ENCODE measurements at regions of chr5 and their contacts with region 1.

Region 1: GRCh38 chr5:151051066-151051930 is 29.5 kb downstream of the TNIP1 start:
- DNase-seq: peak; percentile 50 to 84 (median 76)
- ATAC-seq: peak; percentile 75
- H3K4me3 ChIP-seq: no peak overlapping the region
- H3K4me3 Mint-ChIP-seq: no peak overlapping the region
- H3K27ac ChIP-seq: no peak overlapping the region
- H3K27ac Mint-ChIP-seq: peak overlapping the region; percentile 22
- H3K4me1 ChIP-seq: peaks cover 4% of the 10 kb centered on the region
- H3K4me1 Mint-ChIP-seq: peaks cover 11% of the 10 kb centered on the region
- H3K27me3 ChIP-seq: no peaks in the 10 kb centered on the region
- H3K27me3 Mint-ChIP-seq: no peaks in the 10 kb centered on the region
- CTCF ChIP-seq: peak; percentile 72

Region 2: GRCh38 chr5:150129813-150130492 is 921.3 kb before region 1 on chr5:
- CTCF ChIA-PET with region 1: no interaction called
- POLR2A ChIA-PET with region 1: no interaction called
- intact Hi-C with region 1: no loop called
- DNase-seq: peak in 8 of 9 experiments; percentile 13 to 61 (median 46)
- ATAC-seq: peak; percentile 52
- H3K4me3 ChIP-seq: no peak overlapping the region
- H3K4me3 Mint-ChIP-seq: no peak overlapping the region
- H3K27ac ChIP-seq: no peak overlapping the region
- H3K27ac Mint-ChIP-seq: no peak overlapping the region
- H3K4me1 ChIP-seq: no peaks in the 10 kb centered on the region
- H3K4me1 Mint-ChIP-seq: no peaks in the 10 kb centered on the region
- H3K27me3 ChIP-seq: no peaks in the 10 kb centered on the region
- H3K27me3 Mint-ChIP-seq: no peaks in the 10 kb centered on the region
- CTCF ChIP-seq: peak; percentile 67

Region 3: GRCh38 chr5:150560401-150561193 is 490.7 kb before region 1 on chr5:
- CTCF ChIA-PET with region 1: no interaction called
- POLR2A ChIA-PET with region 1: no interaction called
- intact Hi-C with region 1: loop called in 1 of 2 experiments (anchors 5 kb)
- DNase-seq: peak; percentile 68 to 93 (median 84)
- ATAC-seq: peak; percentile 97
- H3K4me3 ChIP-seq: no peak overlapping the region
- H3K4me3 Mint-ChIP-seq: no peak overlapping the region
- H3K27ac ChIP-seq: no peak overlapping the region
- H3K27ac Mint-ChIP-seq: no peak overlapping the region
- H3K4me1 ChIP-seq: no peaks in the 10 kb centered on the region
- H3K4me1 Mint-ChIP-seq: no peaks in the 10 kb centered on the region
- H3K27me3 ChIP-seq: no peaks in the 10 kb centered on the region
- H3K27me3 Mint-ChIP-seq: peaks cover 3% of the 10 kb centered on the region
- CTCF ChIP-seq: peak; percentile 92

Region 4: GRCh38 chr5:150771034-150771795 is 280.1 kb before region 1 on chr5:
- CTCF ChIA-PET with region 1: no interaction called
- POLR2A ChIA-PET with region 1: no interaction called
- intact Hi-C with region 1: no loop called
- DNase-seq: no peak
- ATAC-seq: no peak
- H3K4me3 ChIP-seq: no peak overlapping the region
- H3K4me3 Mint-ChIP-seq: no peak overlapping the region
- H3K27ac ChIP-seq: no peak overlapping the region
- H3K27ac Mint-ChIP-seq: no peak overlapping the region
- H3K4me1 ChIP-seq: no peaks in the 10 kb centered on the region
- H3K4me1 Mint-ChIP-seq: no peaks in the 10 kb centered on the region
- H3K27me3 ChIP-seq: no peaks in the 10 kb centered on the region
- H3K27me3 Mint-ChIP-seq: peaks cover 5% of the 10 kb centered on the region
- CTCF ChIP-seq: no peak

Region 5: GRCh38 chr5:150978590-150978989 is 72.7 kb before region 1 on chr5:
- CTCF ChIA-PET with region 1: no interaction called
- POLR2A ChIA-PET with region 1: no interaction called
- intact Hi-C with region 1: no loop called
- DNase-seq: no peak
- ATAC-seq: no peak
- H3K4me3 ChIP-seq: no peak overlapping the region
- H3K4me3 Mint-ChIP-seq: no peak overlapping the region
- H3K27ac ChIP-seq: no peak overlapping the region
- H3K27ac Mint-ChIP-seq: no peak overlapping the region
- H3K4me1 ChIP-seq: no peaks in the 10 kb centered on the region
- H3K4me1 Mint-ChIP-seq: no peaks in the 10 kb centered on the region
- H3K27me3 ChIP-seq: no peaks in the 10 kb centered on the region
- H3K27me3 Mint-ChIP-seq: peaks cover 4% of the 10 kb centered on the region
- CTCF ChIP-seq: no peak

Region 6: DNA sequence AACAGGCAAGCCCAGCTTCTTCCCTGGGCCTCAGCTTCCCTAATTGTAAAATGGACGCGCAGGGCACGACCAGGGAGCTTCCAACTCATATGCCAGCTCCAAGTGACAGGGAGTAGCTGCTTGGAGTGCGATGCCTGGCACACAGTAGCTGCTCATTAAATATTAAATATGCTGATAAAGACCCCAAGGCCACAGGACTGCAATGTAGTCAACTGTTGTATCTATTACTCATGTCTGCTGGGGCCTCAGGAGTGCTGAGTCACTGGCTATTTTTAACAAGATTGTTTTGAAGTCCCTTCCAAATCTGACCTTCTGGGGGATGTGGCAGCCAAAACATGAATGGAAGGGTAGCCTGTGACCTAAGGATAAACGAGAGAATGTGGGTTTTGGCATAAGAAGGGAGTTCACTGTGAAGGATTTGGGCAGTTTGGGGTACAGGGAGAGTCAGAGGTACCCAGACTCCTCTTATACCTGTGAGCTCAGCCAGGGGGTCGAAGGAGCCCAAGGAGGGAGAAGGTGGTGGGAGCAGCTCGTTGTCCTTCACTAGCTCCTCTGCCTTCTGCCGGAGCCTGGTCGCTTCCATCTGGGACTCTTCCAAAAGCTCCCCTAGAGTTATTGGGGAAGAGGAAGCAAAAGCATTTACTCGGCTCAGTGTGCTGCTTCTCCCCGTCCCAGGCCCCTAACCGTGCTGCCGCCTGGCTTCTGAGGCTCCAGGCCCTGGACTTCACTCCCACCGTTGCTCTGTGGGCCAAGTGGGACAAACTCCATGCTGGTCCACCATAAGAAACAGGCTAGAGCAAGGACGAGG is 12.0 kb after region 1 on chr5:
- CTCF ChIA-PET with region 1: interaction called, 12 read pairs
- POLR2A ChIA-PET with region 1: interaction called, 3 read pairs
- intact Hi-C with region 1: no loop called
- DNase-seq: no peak
- ATAC-seq: no peak
- H3K4me3 ChIP-seq: no peak overlapping the region
- H3K4me3 Mint-ChIP-seq: no peak overlapping the region
- H3K27ac ChIP-seq: no peak overlapping the region
- H3K27ac Mint-ChIP-seq: peak overlapping the region; percentile 50
- H3K4me1 ChIP-seq: peaks cover 15% of the 10 kb centered on the region
- H3K4me1 Mint-ChIP-seq: peaks cover 45% of the 10 kb centered on the region
- H3K27me3 ChIP-seq: no peaks in the 10 kb centered on the region
- H3K27me3 Mint-ChIP-seq: no peaks in the 10 kb centered on the region
- CTCF ChIP-seq: no peak

Region 7: GRCh38 chr5:151086905-151087360 is 35.6 kb after region 1 on chr5:
- CTCF ChIA-PET with region 1: interaction called, 33 read pairs
- POLR2A ChIA-PET with region 1: no interaction called
- intact Hi-C with region 1: no loop called
- DNase-seq: peak; percentile 29 to 86 (median 62)
- ATAC-seq: peak; percentile 85
- H3K4me3 ChIP-seq: peak overlapping the region in 1 of 2 experiments; percentile 18
- H3K4me3 Mint-ChIP-seq: peak overlapping the region; percentile 72
- H3K27ac ChIP-seq: peak overlapping the region in 1 of 2 experiments; percentile 37
- H3K27ac Mint-ChIP-seq: peak overlapping the region; percentile 78
- H3K4me1 ChIP-seq: peaks cover 18% of the 10 kb centered on the region
- H3K4me1 Mint-ChIP-seq: peaks cover 50% of the 10 kb centered on the region
- H3K27me3 ChIP-seq: no peaks in the 10 kb centered on the region
- H3K27me3 Mint-ChIP-seq: no peaks in the 10 kb centered on the region
- CTCF ChIP-seq: no peak

Region 8: GRCh38 chr5:151141535-151141934 is 90.2 kb after region 1 on chr5:
- CTCF ChIA-PET with region 1: interaction called, 15 read pairs
- POLR2A ChIA-PET with region 1: interaction called, 3 read pairs
- intact Hi-C with region 1: no loop called
- DNase-seq: peak in 8 of 9 experiments; percentile 42 to 85 (median 69)
- ATAC-seq: peak; percentile 51
- H3K4me3 ChIP-seq: peak overlapping the region; percentile 10 to 43
- H3K4me3 Mint-ChIP-seq: peak overlapping the region; percentile 82
- H3K27ac ChIP-seq: peak overlapping the region; percentile 26 to 90
- H3K27ac Mint-ChIP-seq: peak overlapping the region; percentile 95
- H3K4me1 ChIP-seq: peaks cover 93% of the 10 kb centered on the region
- H3K4me1 Mint-ChIP-seq: peaks cover 98% of the 10 kb centered on the region
- H3K27me3 ChIP-seq: no peaks in the 10 kb centered on the region
- H3K27me3 Mint-ChIP-seq: no peaks in the 10 kb centered on the region
- CTCF ChIP-seq: no peak

Measured in CD8-positive, alpha-beta T cell (primary cell).